ENCODE measurements at regions of chr10 and their contacts with region 1.

Region 1: DNA sequence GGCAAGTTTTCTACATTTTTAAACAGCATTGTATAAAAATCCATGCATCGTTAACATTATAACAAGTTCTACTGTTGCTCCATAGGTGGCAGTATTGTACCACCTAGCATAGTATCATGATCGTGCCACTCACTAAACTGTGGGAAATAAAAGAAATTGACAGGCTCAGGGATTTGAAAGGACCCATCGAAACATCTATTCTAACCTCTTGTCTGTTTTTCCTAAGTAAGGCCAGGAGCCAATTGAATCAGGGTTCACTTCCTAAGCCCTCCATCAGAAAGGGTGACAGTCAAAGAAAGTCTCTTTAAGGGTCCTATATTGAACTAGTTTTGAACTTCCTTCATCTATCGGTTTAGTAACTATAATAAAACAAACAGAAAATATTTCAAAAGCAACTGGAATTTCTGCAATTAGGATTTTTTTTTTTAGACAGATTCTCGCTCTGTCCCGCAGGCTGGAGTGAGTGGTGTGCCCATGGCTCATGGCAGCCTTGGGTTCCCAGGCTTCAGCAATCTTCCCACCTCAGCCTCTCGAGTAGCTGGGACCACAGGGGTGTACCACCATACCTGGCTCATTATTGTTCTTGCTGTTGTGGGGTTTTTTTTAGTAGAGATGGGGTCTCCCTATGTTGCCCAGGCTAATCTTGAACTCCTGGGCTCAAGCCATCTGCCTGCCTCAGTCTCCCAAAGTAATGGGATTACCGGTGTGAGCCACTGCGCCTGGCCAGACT is 9.4 kb downstream of the HACD1 start:
- DNase-seq: peak; percentile 14
- ATAC-seq: peak; percentile 86
- H3K4me3 Mint-ChIP-seq: no peak overlapping the region
- H3K27ac Mint-ChIP-seq: no peak overlapping the region
- H3K4me1 Mint-ChIP-seq: no peaks in the 10 kb centered on the region
- H3K27me3 Mint-ChIP-seq: no peaks in the 10 kb centered on the region

Region 2: GRCh38 chr10:17409170-17409733 is 198.5 kb before region 1 on chr10:
- CTCF ChIA-PET with region 1: no interaction called
- POLR2A ChIA-PET with region 1: no interaction called
- intact Hi-C with region 1: loop called in 1 of 2 experiments (anchors 5 kb)
- DNase-seq: no peak
- ATAC-seq: peak; percentile 44
- H3K4me3 Mint-ChIP-seq: no peak overlapping the region
- H3K27ac Mint-ChIP-seq: no peak overlapping the region
- H3K4me1 Mint-ChIP-seq: peaks cover 18% of the 10 kb centered on the region
- H3K27me3 Mint-ChIP-seq: no peaks in the 10 kb centered on the region

Region 3: DNA sequence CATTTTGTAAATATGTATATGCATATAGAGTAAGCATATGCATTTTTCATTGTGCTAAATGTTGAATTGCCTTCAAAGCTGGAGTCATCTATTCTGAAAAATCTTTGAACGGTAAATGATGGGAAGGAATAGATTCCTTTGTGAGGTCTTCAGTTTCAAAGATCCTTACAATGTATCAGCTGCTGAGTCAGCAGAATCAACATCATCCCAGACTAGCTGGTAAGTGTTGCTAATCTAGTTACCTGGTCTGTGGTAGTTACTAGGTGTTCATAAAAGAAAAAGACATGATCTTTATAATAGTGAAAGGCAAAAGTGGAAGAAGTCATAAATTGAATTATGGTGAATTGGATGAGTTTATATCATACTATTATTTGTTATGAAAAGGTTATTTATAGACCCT is 25.6 kb after region 1 on chr10:
- CTCF ChIA-PET with region 1: no interaction called
- POLR2A ChIA-PET with region 1: no interaction called
- intact Hi-C with region 1: no loop called
- DNase-seq: no peak
- ATAC-seq: no peak
- H3K4me3 Mint-ChIP-seq: no peak overlapping the region
- H3K27ac Mint-ChIP-seq: no peak overlapping the region
- H3K4me1 Mint-ChIP-seq: no peaks in the 10 kb centered on the region
- H3K27me3 Mint-ChIP-seq: no peaks in the 10 kb centered on the region

Region 4: GRCh38 chr10:17742918-17743317 is 135.2 kb after region 1 on chr10:
- CTCF ChIA-PET with region 1: interaction called, 19 read pairs
- POLR2A ChIA-PET with region 1: no interaction called
- intact Hi-C with region 1: loop called (anchors 1 kb)
- DNase-seq: peak; percentile 83
- ATAC-seq: peak; percentile 30
- H3K4me3 Mint-ChIP-seq: no peak overlapping the region
- H3K27ac Mint-ChIP-seq: no peak overlapping the region
- H3K4me1 Mint-ChIP-seq: peaks cover 5% of the 10 kb centered on the region
- H3K27me3 Mint-ChIP-seq: no peaks in the 10 kb centered on the region

Region 5: GRCh38 chr10:17872191-17873091 is 264.7 kb after region 1 on chr10:
- CTCF ChIA-PET with region 1: interaction called, 5 read pairs
- POLR2A ChIA-PET with region 1: no interaction called
- intact Hi-C with region 1: loop called (anchors 1 to 2 kb)
- DNase-seq: peak; percentile 9
- ATAC-seq: no peak
- H3K4me3 Mint-ChIP-seq: no peak overlapping the region
- H3K27ac Mint-ChIP-seq: no peak overlapping the region
- H3K4me1 Mint-ChIP-seq: no peaks in the 10 kb centered on the region
- H3K27me3 Mint-ChIP-seq: no peaks in the 10 kb centered on the region

Region 6: DNA sequence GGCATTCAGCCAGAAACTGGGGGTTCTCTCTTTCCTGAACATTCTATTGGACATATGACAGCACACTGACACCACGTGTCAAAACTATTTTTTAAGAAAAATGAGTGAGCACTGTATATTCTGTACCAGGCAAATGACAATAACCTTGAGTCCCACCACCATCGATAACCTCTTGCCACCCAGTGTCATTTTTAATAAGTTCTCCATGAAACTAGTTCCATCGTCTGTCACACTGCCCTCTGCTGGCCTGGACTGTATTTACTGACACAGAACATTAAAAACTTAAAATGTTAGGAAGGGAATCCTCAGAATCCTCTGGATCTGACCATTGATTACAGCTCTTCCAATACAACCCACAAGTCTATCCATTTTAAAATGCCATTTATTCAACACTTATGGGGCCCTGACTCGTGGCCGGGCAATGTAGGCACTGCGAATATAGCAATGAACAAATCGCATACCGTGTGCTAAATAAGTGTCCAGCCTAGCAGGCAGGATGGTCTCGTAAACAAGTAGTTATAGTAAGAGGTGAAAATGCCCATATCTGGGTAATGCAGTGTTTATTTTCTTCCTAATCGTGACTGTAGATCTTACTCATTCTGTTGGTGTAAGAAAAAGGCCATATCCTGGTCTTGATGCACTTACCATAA is 496.6 kb after region 1 on chr10:
- CTCF ChIA-PET with region 1: no interaction called
- POLR2A ChIA-PET with region 1: no interaction called
- intact Hi-C with region 1: loop called (anchors 1 to 2 kb)
- DNase-seq: peak; percentile 74
- ATAC-seq: no peak
- H3K4me3 Mint-ChIP-seq: no peak overlapping the region
- H3K27ac Mint-ChIP-seq: no peak overlapping the region
- H3K4me1 Mint-ChIP-seq: no peaks in the 10 kb centered on the region
- H3K27me3 Mint-ChIP-seq: peaks cover 3% of the 10 kb centered on the region

Region 7: GRCh38 chr10:18214691-18215563 is 607.2 kb after region 1 on chr10:
- CTCF ChIA-PET with region 1: no interaction called
- POLR2A ChIA-PET with region 1: no interaction called
- intact Hi-C with region 1: loop called in 1 of 2 experiments (anchors 2 kb)
- DNase-seq: peak; percentile 45
- ATAC-seq: peak; percentile 36
- H3K4me3 Mint-ChIP-seq: no peak overlapping the region
- H3K27ac Mint-ChIP-seq: no peak overlapping the region
- H3K4me1 Mint-ChIP-seq: no peaks in the 10 kb centered on the region
- H3K27me3 Mint-ChIP-seq: peaks cover 2% of the 10 kb centered on the region

Region 8: DNA sequence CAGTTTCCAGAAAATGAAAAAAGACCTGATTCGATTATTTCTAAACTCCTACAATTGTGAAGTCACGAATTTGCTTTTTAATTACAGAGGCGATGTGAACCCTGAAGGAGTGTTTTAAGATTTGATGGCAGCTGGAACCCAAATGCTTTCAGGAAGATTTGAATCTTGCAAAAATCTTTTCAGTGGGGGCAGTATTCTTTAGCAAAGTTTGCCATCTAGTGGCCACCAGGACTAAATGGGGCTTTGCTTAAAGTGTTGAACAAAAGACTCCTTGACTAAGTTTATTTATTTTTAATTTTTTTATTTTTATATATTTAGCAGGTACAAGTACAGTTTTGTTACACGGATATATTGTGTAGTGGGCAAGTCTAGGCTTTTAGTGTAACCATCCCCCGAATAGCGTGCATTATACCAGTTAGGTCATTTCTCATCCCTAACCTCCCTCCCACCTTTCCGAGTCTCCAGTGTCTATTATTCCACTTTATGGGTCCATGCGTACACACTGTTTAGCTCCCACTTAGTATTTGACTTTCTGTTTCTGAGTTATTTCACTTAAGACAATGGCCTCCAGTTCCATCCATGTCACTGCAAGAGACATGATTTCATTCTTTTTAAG is 631.2 kb after region 1 on chr10:
- CTCF ChIA-PET with region 1: no interaction called
- POLR2A ChIA-PET with region 1: no interaction called
- intact Hi-C with region 1: loop called in 1 of 2 experiments (anchors 5 kb)
- DNase-seq: no peak
- ATAC-seq: no peak
- H3K4me3 Mint-ChIP-seq: no peak overlapping the region
- H3K27ac Mint-ChIP-seq: no peak overlapping the region
- H3K4me1 Mint-ChIP-seq: no peaks in the 10 kb centered on the region
- H3K27me3 Mint-ChIP-seq: peaks cover 9% of the 10 kb centered on the region